ENCODE measurements at regions of chr11 and their contacts with region 1.

Region 1: GRCh38 chr11:128956401-128957201 is 13.9 kb upstream of the TP53AIP1 start:
- DNase-seq: no peak
- ATAC-seq: peak; percentile 87
- H3K4me3 ChIP-seq: no peak overlapping the region
- H3K27ac ChIP-seq: no peak overlapping the region
- H3K4me1 ChIP-seq: no peaks in the 10 kb centered on the region
- H3K27me3 ChIP-seq: no peaks in the 10 kb centered on the region
- CTCF ChIP-seq: peak; percentile 76

Region 2: GRCh38 chr11:128157423-128158298 is 798.9 kb before region 1 on chr11:
- intact Hi-C with region 1: loop called (anchors 10 kb)
- DNase-seq: no peak
- ATAC-seq: peak; percentile 91
- H3K4me3 ChIP-seq: no peak overlapping the region
- H3K27ac ChIP-seq: no peak overlapping the region
- H3K4me1 ChIP-seq: peaks cover 3% of the 10 kb centered on the region
- H3K27me3 ChIP-seq: no peaks in the 10 kb centered on the region
- CTCF ChIP-seq: peak; percentile 84

Region 3: GRCh38 chr11:128884703-128885338 is 71.8 kb before region 1 on chr11:
- intact Hi-C with region 1: loop called (anchors 2 kb)
- DNase-seq: no peak
- ATAC-seq: peak; percentile 90
- H3K4me3 ChIP-seq: no peak overlapping the region
- H3K27ac ChIP-seq: no peak overlapping the region
- H3K4me1 ChIP-seq: no peaks in the 10 kb centered on the region
- H3K27me3 ChIP-seq: peaks cover 1% of the 10 kb centered on the region
- CTCF ChIP-seq: peak; percentile 88

Region 4: DNA sequence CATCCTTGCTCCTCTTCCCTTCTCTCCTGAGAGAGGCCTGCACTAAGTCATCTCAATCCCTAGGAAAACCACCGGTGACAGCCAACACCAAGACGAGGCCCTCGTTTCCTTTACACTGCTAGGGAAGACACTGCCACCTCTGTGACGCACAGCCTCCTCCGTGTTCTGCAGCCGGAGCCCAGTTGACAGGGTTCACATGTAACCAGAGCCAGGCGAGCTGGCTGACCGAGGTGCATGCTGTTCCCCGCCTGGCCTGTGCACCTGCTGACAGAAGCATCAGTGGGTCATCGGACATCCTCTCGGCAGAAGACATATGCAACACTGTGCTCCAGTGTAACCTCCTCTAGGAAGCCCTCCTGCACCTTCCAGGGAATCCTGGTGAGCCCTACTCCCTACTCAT is 100.3 kb after region 1 on chr11:
- intact Hi-C with region 1: no loop called
- DNase-seq: no peak
- ATAC-seq: peak; percentile 31
- H3K4me3 ChIP-seq: no peak overlapping the region
- H3K27ac ChIP-seq: no peak overlapping the region
- H3K4me1 ChIP-seq: no peaks in the 10 kb centered on the region
- H3K27me3 ChIP-seq: no peaks in the 10 kb centered on the region
- CTCF ChIP-seq: no peak

Measured in upper lobe of right lung (tissue), 1 donor.